B cell (primary cell): ENCODE measurements at regions of chr1 and their contacts with region 1.

Region 1: DNA sequence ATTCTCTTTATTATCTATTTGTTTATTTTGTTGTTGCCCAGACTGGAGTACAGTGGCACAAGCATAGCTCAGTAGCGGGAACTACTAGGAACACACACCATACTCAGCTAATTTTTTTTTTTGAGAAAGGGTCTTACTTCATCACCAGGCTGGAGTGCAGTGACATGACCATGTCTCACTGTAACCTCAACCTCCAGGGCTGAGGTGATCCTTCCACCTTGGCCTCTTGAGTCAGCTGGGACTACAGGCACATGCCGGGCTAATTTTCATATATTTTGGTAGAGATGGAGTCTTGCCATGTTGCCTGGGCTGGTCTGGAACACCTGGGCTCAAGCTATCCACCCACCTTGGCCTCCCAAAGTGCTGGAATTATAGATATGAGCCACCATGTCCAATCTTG is 5.3 kb upstream of the TXNIP start:
- DNase-seq: no peak
- ATAC-seq: no peak
- H3K4me3 ChIP-seq: no peak overlapping the region
- H3K4me3 Mint-ChIP-seq: no peak overlapping the region
- H3K27ac ChIP-seq: peak overlapping the region in 1 of 2 donors; percentile 61
- H3K27ac Mint-ChIP-seq: peak overlapping the region; percentile 62
- H3K4me1 ChIP-seq: peaks cover 47 to 54% of the 10 kb centered on the region in 2 donors
- H3K4me1 Mint-ChIP-seq: peaks cover 60% of the 10 kb centered on the region
- H3K27me3 ChIP-seq: no peaks in the 10 kb centered on the region
- H3K27me3 Mint-ChIP-seq: no peaks in the 10 kb centered on the region
- CTCF ChIP-seq: no peak

Region 2: DNA sequence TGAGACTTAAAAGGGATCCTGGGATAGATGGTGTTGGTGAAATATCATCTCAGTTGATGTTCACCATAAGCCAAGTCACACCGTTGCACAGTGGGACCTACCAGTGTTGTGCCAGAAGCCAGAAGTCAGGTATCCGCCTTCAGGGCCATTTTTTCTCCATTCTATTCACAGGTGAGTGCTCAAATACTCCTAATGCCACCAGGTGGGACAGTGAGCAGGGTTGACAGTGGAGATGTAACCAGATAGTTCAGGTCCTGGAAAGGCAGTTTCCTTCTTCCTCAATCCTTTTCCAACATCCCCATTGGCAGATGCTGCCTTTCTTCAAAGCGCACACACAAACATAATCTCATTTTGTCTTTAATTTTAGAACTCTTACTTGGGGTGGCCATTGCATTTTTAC is 270.8 kb before region 1 on chr1:
- CTCF ChIA-PET with region 1: no interaction called
- POLR2A ChIA-PET with region 1: no interaction called
- intact Hi-C with region 1: no loop called
- DNase-seq: no peak
- ATAC-seq: no peak
- H3K4me3 ChIP-seq: no peak overlapping the region
- H3K4me3 Mint-ChIP-seq: no peak overlapping the region
- H3K27ac ChIP-seq: no peak overlapping the region
- H3K27ac Mint-ChIP-seq: no peak overlapping the region
- H3K4me1 ChIP-seq: no peaks in the 10 kb centered on the region
- H3K4me1 Mint-ChIP-seq: peaks cover 2% of the 10 kb centered on the region
- H3K27me3 ChIP-seq: no peaks in the 10 kb centered on the region
- H3K27me3 Mint-ChIP-seq: no peaks in the 10 kb centered on the region
- CTCF ChIP-seq: no peak

Region 3: GRCh38 chr1:145985502-145986439 is 15.9 kb before region 1 on chr1:
- CTCF ChIA-PET with region 1: interaction called, 361 read pairs
- POLR2A ChIA-PET with region 1: interaction called, 131 read pairs
- intact Hi-C with region 1: no loop called
- DNase-seq: no peak
- ATAC-seq: peak; percentile 24
- H3K4me3 ChIP-seq: no peak overlapping the region
- H3K4me3 Mint-ChIP-seq: peak overlapping the region; percentile 49
- H3K27ac ChIP-seq: peak overlapping the region; percentile 41 to 43
- H3K27ac Mint-ChIP-seq: peak overlapping the region; percentile 93
- H3K4me1 ChIP-seq: peaks cover 65 to 67% of the 10 kb centered on the region in 2 donors
- H3K4me1 Mint-ChIP-seq: peaks cover 77% of the 10 kb centered on the region
- H3K27me3 ChIP-seq: no peaks in the 10 kb centered on the region
- H3K27me3 Mint-ChIP-seq: no peaks in the 10 kb centered on the region
- CTCF ChIP-seq: no peak